GM10248 (cell line): ENCODE measurements at regions of chr6 and their contacts with region 1.

Region 1: DNA sequence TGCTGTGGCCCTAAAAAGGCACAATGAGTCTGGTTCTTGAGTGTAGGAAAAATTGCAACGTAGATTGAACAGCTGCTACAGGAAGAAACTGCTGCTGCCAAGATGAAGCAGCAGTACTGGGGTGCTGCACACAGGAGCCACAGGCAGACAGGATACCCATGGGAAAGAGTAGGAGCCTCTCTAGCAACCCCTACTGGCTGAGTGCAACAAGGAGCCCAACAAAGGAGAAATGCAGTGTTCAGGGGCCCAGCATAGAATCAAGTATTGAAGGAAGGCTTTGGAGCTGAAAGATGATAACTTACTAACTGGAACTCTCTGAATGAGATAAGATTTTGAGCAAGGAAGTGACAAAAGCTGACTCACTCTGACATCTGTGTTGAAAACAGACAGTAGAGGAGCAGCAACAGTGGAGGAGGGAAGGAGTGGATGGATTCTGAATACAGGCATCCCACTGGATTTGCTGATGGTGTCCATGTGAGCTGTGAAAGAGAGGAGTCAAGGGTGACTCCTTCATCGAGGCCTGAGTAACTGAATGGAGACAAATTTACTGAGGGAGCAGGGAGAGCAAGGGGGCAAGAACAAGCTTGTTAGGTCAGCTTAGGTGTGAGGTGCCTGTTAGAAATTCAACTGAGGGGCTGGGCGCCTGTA is 534.7 kb upstream of the JARID2 start:
- DNase-seq: peak; percentile 60
- CTCF ChIP-seq: peak; percentile 62

Region 2: GRCh38 chr6:14721103-14721746 is 10.0 kb after region 1 on chr6:
- CTCF ChIA-PET with region 1: interaction called, 15 read pairs
- POLR2A ChIA-PET with region 1: no interaction called
- DNase-seq: no peak
- CTCF ChIP-seq: no peak